GM12878 (cell line): ENCODE measurements at regions of chr19 and their contacts with region 1.

Region 1: GRCh38 chr19:15288146-15288963 is 44.0 kb downstream of the BRD4 start:
- DNase-seq: no peak
- ATAC-seq: peak; percentile 71
- H3K4me3 ChIP-seq: peak overlapping the region; percentile 44
- H3K27ac ChIP-seq: peak overlapping the region; percentile 68
- H3K4me1 ChIP-seq: peaks cover 83% of the 10 kb centered on the region
- H3K27me3 ChIP-seq: no peaks in the 10 kb centered on the region
- CTCF ChIP-seq: no peak
- EP300 ChIP-seq: no peak
- POLR2A ChIP-seq: no peak; the same call in 1 of the 2 replicates
- RAD21 ChIP-seq: no peak

Region 2: GRCh38 chr19:15318241-15318691 is 29.9 kb after region 1 on chr19:
- CTCF ChIA-PET with region 1: interaction called, 4 read pairs
- POLR2A ChIA-PET with region 1: interaction called, 4 read pairs
- RAD21 ChIA-PET with region 1: interaction called, 3 read pairs
- SMC1A ChIA-PET with region 1: interaction called, 11 read pairs
- in situ Hi-C with region 1: no loop called
- intact Hi-C with region 1: no loop called
- DNase-seq: peak; percentile 48
- ATAC-seq: peak; percentile 81
- H3K4me3 ChIP-seq: 0 out of 2 replicates have a peak overlapping the region, but pooled peaks have one; percentile 17
- H3K27ac ChIP-seq: peak overlapping the region; percentile 73
- H3K4me1 ChIP-seq: peaks cover 42% of the 10 kb centered on the region
- H3K27me3 ChIP-seq: no peaks in the 10 kb centered on the region
- CTCF ChIP-seq: no peak
- EP300 ChIP-seq: no peak
- POLR2A ChIP-seq: no peak
- RAD21 ChIP-seq: no peak